ENCODE measurements at regions of chr20 and their contacts with region 1.

Region 1: GRCh38 chr20:51639206-51639832 is 96.8 kb upstream of the NFATC2 start:
- DNase-seq: peak; percentile 70 to 85
- H3K4me3 ChIP-seq: no peak overlapping the region
- H3K27ac ChIP-seq: no peak overlapping the region
- H3K4me1 ChIP-seq: peaks cover 0 to 7% (median 2%) of the 10 kb centered on the region in 4 donors
- H3K27me3 ChIP-seq: no peaks in the 10 kb centered on the region
- CTCF ChIP-seq: peak in 5 of 7 experiments; percentile 76 to 86 (median 81)
- EP300 ChIP-seq: no peak
- POLR2A ChIP-seq: no peak

Region 2: DNA sequence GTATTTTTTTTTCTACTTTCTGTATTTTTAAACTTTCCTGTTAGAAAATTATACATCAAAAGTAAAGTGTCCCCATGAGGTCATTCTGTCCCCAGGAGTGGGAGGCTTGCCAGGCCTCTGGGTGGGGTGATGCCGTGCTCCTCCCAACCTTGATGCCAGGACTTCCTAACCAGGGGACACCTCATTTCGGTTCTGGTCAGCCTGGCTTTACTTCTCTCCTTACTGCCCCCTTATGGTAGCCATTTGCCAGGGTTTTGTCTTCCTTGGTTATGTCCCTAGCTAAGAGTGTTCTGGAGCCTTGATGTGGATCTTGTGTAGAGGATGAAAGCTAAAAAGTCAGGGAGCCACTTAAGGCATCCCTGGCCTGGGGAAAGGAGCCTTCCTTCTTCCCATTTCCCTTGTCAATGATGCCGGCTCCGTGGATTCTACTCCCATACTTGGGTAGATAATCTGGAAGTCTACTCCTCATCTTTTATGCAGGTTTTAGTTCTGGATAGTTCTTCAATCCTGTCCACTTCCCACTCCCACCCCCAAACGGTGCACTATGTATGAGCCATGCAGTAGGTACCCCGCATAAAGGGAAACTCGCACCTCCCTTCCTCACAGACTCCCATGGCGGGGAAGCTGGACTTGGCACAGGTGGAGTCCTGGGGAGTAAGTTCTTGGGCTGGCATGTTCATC is 327.1 kb after region 1 on chr20:
- intact Hi-C with region 1: loop called (anchors 10 kb)
- DNase-seq: peak; percentile 52 to 79
- H3K4me3 ChIP-seq: no peak overlapping the region
- H3K27ac ChIP-seq: no peak overlapping the region
- H3K4me1 ChIP-seq: peaks cover 0 to 4% (median 0%) of the 10 kb centered on the region in 4 donors
- H3K27me3 ChIP-seq: no peaks in the 10 kb centered on the region
- CTCF ChIP-seq: peak in 4 of 7 experiments; percentile 26 to 55 (median 41)
- EP300 ChIP-seq: no peak
- POLR2A ChIP-seq: no peak

Measured in stomach (tissue), 19 donors.